T-cell (primary cell): ENCODE measurements at regions of chr1 and their contacts with region 1.

Region 1: GRCh38 chr1:52235646-52236045 is 93.8 kb downstream of the ZFYVE9 start:
- DNase-seq: no peak
- ATAC-seq: no peak
- H3K4me3 ChIP-seq: no peak overlapping the region
- H3K4me3 Mint-ChIP-seq: no peak overlapping the region
- H3K27ac ChIP-seq: no peak overlapping the region
- H3K27ac Mint-ChIP-seq: no peak overlapping the region
- H3K4me1 ChIP-seq: no peaks in the 10 kb centered on the region
- H3K4me1 Mint-ChIP-seq: peaks cover 0 to 13% (median 2%) of the 10 kb centered on the region in 3 donors
- H3K27me3 ChIP-seq: no peaks in the 10 kb centered on the region
- H3K27me3 Mint-ChIP-seq: no peaks in the 10 kb centered on the region

Region 2: GRCh38 chr1:52669696-52670095 is 434.1 kb after region 1 on chr1:
- CTCF ChIA-PET with region 1: no interaction called
- POLR2A ChIA-PET with region 1: interaction called in 1 of 2 experiments, 10 read pairs
- DNase-seq: no peak
- ATAC-seq: no peak
- H3K4me3 ChIP-seq: no peak overlapping the region
- H3K4me3 Mint-ChIP-seq: no peak overlapping the region
- H3K27ac ChIP-seq: no peak overlapping the region
- H3K27ac Mint-ChIP-seq: peak overlapping the region in 1 of 2 donors; percentile 12
- H3K4me1 ChIP-seq: peaks cover 0 to 1% of the 10 kb centered on the region in 2 experiments
- H3K4me1 Mint-ChIP-seq: peaks cover 13% of the 10 kb centered on the region in 3 donors
- H3K27me3 ChIP-seq: no peaks in the 10 kb centered on the region
- H3K27me3 Mint-ChIP-seq: no peaks in the 10 kb centered on the region